HepG2 (cell line): ENCODE measurements at regions of chr2 and their contacts with region 1.

Region 1: DNA sequence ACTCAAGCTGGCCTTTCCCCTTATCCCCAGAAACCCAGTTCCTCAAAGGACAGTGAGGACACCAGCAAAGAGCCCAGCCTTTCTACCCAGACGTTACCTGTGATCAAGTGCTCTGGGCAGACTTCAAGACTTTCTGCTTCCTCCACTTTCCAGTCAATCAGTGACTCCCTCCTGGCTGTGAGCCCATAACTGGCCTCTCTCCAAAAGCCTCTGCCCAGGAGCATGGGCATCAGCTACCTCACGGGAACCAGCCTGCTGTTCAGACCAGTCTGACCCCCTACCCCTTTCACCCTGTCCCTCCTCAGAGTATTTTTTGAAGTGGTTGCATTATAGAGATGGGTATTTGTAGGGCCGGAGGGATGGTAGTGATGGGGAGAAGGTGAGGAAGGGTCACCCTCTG is 27.7 kb upstream of the CYP27A1 start:
- DNase-seq: no peak
- ATAC-seq: no peak
- H3K4me3 ChIP-seq: no peak overlapping the region
- H3K27ac ChIP-seq: peak overlapping the region; percentile 96
- H3K4me1 ChIP-seq: peaks cover 95% of the 10 kb centered on the region
- H3K27me3 ChIP-seq: no peaks in the 10 kb centered on the region
- CTCF ChIP-seq: no peak
- EP300 ChIP-seq: no peak
- POLR2A ChIP-seq: no peak
- RAD21 ChIP-seq: no peak

Region 2: GRCh38 chr2:218806346-218806978 is 52.3 kb after region 1 on chr2:
- CTCF ChIA-PET with region 1: no interaction called
- POLR2A ChIA-PET with region 1: interaction called, 5 read pairs
- in situ Hi-C with region 1: no loop called
- intact Hi-C with region 1: loop called (anchors 2 kb)
- DNase-seq: peak; percentile 91
- ATAC-seq: peak; percentile 81
- H3K4me3 ChIP-seq: peak overlapping the region in 2 of 3 experiments; percentile 38 to 40; a peak in 4 of 6 replicates
- H3K27ac ChIP-seq: peak overlapping the region; percentile 54
- H3K4me1 ChIP-seq: peaks cover 32% of the 10 kb centered on the region
- H3K27me3 ChIP-seq: no peaks in the 10 kb centered on the region
- CTCF ChIP-seq: no peak
- EP300 ChIP-seq: peak; percentile 86 to 98
- POLR2A ChIP-seq: no peak
- RAD21 ChIP-seq: no peak

Region 3: DNA sequence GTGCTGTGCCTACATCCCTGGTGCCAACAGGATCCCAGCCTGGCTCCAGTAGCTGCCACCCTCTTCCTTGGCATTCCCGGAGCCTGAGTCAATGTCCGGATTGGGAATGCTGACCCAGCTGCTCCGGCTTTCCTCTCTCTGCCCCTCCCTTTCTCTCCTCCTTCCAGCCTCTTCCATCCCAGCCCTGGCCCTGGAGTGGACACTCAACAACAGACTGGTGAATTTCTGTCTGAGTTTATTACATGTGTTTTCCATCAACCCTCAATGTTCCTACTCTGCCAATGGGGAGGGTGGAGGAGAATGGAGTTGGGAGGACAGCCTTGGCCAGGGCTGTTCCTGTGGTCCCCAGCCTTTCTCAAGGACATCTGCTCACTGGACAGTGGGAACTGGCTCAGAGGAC is 78.3 kb after region 1 on chr2:
- CTCF ChIA-PET with region 1: no interaction called
- POLR2A ChIA-PET with region 1: interaction called, 10 read pairs
- in situ Hi-C with region 1: loop called (anchors 25 kb)
- intact Hi-C with region 1: no loop called
- DNase-seq: no peak
- ATAC-seq: no peak
- H3K4me3 ChIP-seq: no peak overlapping the region
- H3K27ac ChIP-seq: no peak overlapping the region
- H3K4me1 ChIP-seq: peaks cover 39% of the 10 kb centered on the region
- H3K27me3 ChIP-seq: peaks cover 16 to 79% of the 10 kb centered on the region in 2 experiments; a peak in 4 of 5 replicates
- CTCF ChIP-seq: no peak
- EP300 ChIP-seq: no peak
- POLR2A ChIP-seq: no peak
- RAD21 ChIP-seq: no peak